Dorsolateral prefrontal cortex (tissue), 120 donors: ENCODE measurements at regions of chr10 and their contacts with region 1.

Region 1: GRCh38 chr10:89563861-89564478 is 28.6 kb upstream of the SLC16A12 start:
- DNase-seq: peak in 1 of 10 donors; percentile 13
- H3K4me3 ChIP-seq: no peak overlapping the region
- H3K27ac ChIP-seq: no peak overlapping the region
- H3K27me3 ChIP-seq: no peaks in the 10 kb centered on the region
- CTCF ChIP-seq: peak; percentile 67 to 92 (median 81)

Region 2: DNA sequence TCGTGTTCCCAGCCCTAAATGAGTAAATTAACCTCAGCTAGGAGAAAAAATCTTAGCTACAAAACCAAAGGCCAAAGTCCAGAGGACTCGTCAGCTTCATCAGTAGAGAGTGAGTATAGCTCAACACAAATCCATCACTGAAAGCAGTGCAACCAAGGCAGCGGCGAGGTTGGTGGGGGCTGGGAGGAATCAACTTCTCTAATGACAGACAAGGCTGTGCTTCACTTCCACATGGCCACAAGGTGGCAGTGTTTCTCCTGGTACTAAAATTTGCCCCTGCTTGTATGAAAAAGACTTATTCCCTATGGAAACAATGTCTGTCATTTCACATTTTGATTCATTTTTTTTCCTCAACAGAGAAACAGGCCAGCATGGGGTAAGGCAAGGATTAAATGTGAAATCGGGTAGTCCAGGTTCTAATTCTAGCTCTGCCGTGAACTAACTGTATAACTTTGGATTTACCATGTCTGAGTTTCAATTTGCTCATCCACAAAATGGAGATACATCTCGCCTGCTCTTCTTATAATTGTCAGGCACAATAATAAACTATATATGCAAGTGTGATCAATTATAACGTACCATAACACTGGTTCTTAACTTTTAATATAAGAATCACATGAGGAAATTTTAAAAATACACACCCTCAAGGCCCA is 534.1 kb before region 1 on chr10:
- intact Hi-C with region 1: loop called in 1 of 2 experiments (anchors 10 kb)
- DNase-seq: peak; percentile 35 to 89 (median 78)
- H3K4me3 ChIP-seq: peak overlapping the region in 4 of 59 donors; percentile 5 to 35 (median 26)
- H3K27ac ChIP-seq: peak overlapping the region in 5 of 59 donors; percentile 3 to 23 (median 11)
- H3K27me3 ChIP-seq: no peaks in the 10 kb centered on the region
- CTCF ChIP-seq: peak; percentile 86 to 99 (median 96)

Region 3: GRCh38 chr10:89296220-89296648 is 267.7 kb before region 1 on chr10:
- intact Hi-C with region 1: loop called in 1 of 2 experiments (anchors 10 kb)
- DNase-seq: no peak
- H3K4me3 ChIP-seq: no peak overlapping the region
- H3K27ac ChIP-seq: peak overlapping the region in 52 of 59 donors; percentile 0 to 98 (median 52)
- H3K27me3 ChIP-seq: no peaks in the 10 kb centered on the region
- CTCF ChIP-seq: no peak

Region 4: GRCh38 chr10:89426230-89426868 is 137.6 kb before region 1 on chr10:
- intact Hi-C with region 1: loop called (anchors 5 kb)
- DNase-seq: no peak
- H3K4me3 ChIP-seq: no peak overlapping the region
- H3K27ac ChIP-seq: no peak overlapping the region
- H3K27me3 ChIP-seq: no peaks in the 10 kb centered on the region
- CTCF ChIP-seq: peak; percentile 68 to 92 (median 82)